ENCODE measurements at regions of chr15 and their contacts with region 1.

Region 1: DNA sequence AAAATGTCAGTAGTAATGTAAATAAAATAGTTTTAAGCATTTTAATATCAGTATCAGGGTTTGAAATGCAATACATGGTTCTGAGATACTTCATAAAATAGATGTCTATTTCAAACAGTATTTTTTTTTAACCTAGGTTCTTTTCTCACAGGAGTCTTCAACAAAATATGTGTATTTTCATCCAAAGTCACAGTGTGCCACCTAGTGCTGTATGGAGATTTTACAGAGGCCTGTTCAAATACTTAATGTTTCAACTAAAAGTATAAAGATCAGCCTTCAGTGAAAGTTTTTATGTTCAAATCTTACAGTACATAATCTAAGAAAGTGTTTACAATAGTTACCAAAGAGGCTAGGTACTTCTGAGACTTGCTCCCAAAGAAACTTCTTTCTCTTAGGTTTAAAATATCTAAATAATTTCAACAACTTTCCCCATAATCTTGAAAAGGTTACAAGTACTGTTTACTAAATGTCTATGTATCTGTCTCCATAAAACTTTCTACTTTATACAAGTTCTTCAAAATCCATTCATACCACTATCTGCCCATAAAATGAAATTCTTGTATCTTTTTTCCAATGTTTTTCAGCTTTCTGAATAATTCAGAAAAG is 38.3 kb downstream of the SCAPER start:
- DNase-seq: peak in 1 of 2 experiments; percentile 44
- H3K4me3 ChIP-seq: no peak overlapping the region
- H3K4me3 Mint-ChIP-seq: no peak overlapping the region
- H3K27ac Mint-ChIP-seq: no peak overlapping the region
- H3K4me1 ChIP-seq: no peaks in the 10 kb centered on the region
- H3K4me1 Mint-ChIP-seq: peaks cover 10% of the 10 kb centered on the region
- H3K27me3 ChIP-seq: no peaks in the 10 kb centered on the region
- H3K27me3 Mint-ChIP-seq: no peaks in the 10 kb centered on the region
- CTCF ChIP-seq: peak; percentile 38 to 44

Region 2: GRCh38 chr15:76190834-76191538 is 675.8 kb before region 1 on chr15:
- CTCF ChIA-PET with region 1: no interaction called
- POLR2A ChIA-PET with region 1: interaction called, 4 read pairs
- intact Hi-C with region 1: loop called (anchors 2 kb)
- DNase-seq: peak; percentile 78 to 87
- H3K4me3 ChIP-seq: peak overlapping the region; percentile 19; the same call in 1 of the 2 replicates
- H3K4me3 Mint-ChIP-seq: peak overlapping the region; percentile 66
- H3K27ac Mint-ChIP-seq: peak overlapping the region; percentile 19
- H3K4me1 ChIP-seq: peaks cover 9% of the 10 kb centered on the region
- H3K4me1 Mint-ChIP-seq: peaks cover 16% of the 10 kb centered on the region
- H3K27me3 ChIP-seq: no peaks in the 10 kb centered on the region
- H3K27me3 Mint-ChIP-seq: peaks cover 3% of the 10 kb centered on the region
- CTCF ChIP-seq: peak; percentile 84 to 89

Region 3: GRCh38 chr15:76823890-76824289 is 42.9 kb before region 1 on chr15:
- CTCF ChIA-PET with region 1: no interaction called
- POLR2A ChIA-PET with region 1: no interaction called
- intact Hi-C with region 1: no loop called
- DNase-seq: no peak
- H3K4me3 ChIP-seq: no peak overlapping the region
- H3K4me3 Mint-ChIP-seq: no peak overlapping the region
- H3K27ac Mint-ChIP-seq: no peak overlapping the region
- H3K4me1 ChIP-seq: no peaks in the 10 kb centered on the region
- H3K4me1 Mint-ChIP-seq: no peaks in the 10 kb centered on the region
- H3K27me3 ChIP-seq: no peaks in the 10 kb centered on the region
- H3K27me3 Mint-ChIP-seq: no peaks in the 10 kb centered on the region
- CTCF ChIP-seq: no peak

Measured in Caco-2 (cell line).